ENCODE measurements at regions of chr6 and their contacts with region 1.

Region 1: GRCh38 chr6:4155848-4156466 is 20.6 kb upstream of the ECI2 start:
- DNase-seq: peak; percentile 61 to 81 (median 66)
- H3K4me3 ChIP-seq: no peak overlapping the region
- H3K4me3 Mint-ChIP-seq: no peak overlapping the region
- H3K27ac ChIP-seq: no peak overlapping the region
- H3K27ac Mint-ChIP-seq: no peak overlapping the region
- H3K4me1 ChIP-seq: peaks cover 8% of the 10 kb centered on the region
- H3K4me1 Mint-ChIP-seq: peaks cover 2 to 6% (median 4%) of the 10 kb centered on the region in 3 donors
- H3K27me3 ChIP-seq: no peaks in the 10 kb centered on the region
- H3K27me3 Mint-ChIP-seq: peaks cover 8 to 20% of the 10 kb centered on the region in 2 donors

Region 2: DNA sequence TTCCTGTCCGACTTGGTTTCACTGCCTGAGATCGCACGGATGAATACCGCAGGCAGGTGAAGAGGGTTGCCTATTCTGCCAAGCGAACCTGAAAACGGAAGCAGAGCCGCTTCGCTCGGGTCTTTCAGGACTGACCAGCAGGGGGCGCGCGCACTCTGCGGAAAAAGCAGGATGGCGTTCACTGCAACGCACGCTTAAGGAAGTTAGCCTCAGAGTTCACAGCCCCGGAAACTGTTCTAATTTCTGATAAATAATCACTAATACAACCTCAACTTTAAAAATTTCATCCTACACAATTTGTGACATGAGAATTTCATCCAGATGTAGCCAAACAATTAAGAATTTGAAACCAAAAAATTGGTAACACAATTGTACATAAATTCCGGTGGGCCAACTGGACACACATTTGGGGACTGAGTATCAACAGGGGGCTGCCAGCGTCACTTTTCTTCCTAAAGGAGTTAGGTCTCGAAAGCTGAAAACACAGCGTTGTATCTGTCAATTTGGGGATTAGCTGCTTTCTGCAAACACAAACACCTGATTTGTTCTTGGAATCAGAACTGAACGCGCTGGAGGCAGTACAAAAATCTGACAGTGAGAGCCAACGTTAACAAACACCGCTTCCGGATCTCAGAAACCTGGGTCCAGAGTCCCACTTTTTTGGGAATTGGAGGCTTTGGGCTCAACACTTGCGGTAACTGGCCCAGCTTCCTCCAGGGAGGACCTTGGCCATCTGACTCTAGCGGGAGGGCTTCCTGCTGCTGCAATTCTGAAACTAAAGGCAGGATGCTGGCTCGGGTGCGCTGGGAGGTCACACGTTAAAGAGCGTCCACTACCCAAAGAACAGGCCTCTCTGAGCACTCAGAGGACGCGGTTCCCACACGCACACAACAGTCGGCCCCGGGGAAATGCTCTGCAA is 413.3 kb before region 1 on chr6:
- CTCF ChIA-PET with region 1: interaction called, 13 read pairs
- POLR2A ChIA-PET with region 1: no interaction called
- DNase-seq: peak; percentile 73 to 89 (median 84)
- H3K4me3 ChIP-seq: peak overlapping the region; percentile 11
- H3K4me3 Mint-ChIP-seq: peak overlapping the region; percentile 31 to 87 (median 63)
- H3K27ac ChIP-seq: no peak overlapping the region
- H3K27ac Mint-ChIP-seq: peak overlapping the region in 6 of 8 donors; percentile 7 to 79 (median 57)
- H3K4me1 ChIP-seq: peaks cover 6% of the 10 kb centered on the region
- H3K4me1 Mint-ChIP-seq: peaks cover 9 to 13% (median 11%) of the 10 kb centered on the region in 3 donors
- H3K27me3 ChIP-seq: peaks cover 5% of the 10 kb centered on the region
- H3K27me3 Mint-ChIP-seq: peaks cover under 1 to 34% of the 10 kb centered on the region in 2 donors

Region 3: DNA sequence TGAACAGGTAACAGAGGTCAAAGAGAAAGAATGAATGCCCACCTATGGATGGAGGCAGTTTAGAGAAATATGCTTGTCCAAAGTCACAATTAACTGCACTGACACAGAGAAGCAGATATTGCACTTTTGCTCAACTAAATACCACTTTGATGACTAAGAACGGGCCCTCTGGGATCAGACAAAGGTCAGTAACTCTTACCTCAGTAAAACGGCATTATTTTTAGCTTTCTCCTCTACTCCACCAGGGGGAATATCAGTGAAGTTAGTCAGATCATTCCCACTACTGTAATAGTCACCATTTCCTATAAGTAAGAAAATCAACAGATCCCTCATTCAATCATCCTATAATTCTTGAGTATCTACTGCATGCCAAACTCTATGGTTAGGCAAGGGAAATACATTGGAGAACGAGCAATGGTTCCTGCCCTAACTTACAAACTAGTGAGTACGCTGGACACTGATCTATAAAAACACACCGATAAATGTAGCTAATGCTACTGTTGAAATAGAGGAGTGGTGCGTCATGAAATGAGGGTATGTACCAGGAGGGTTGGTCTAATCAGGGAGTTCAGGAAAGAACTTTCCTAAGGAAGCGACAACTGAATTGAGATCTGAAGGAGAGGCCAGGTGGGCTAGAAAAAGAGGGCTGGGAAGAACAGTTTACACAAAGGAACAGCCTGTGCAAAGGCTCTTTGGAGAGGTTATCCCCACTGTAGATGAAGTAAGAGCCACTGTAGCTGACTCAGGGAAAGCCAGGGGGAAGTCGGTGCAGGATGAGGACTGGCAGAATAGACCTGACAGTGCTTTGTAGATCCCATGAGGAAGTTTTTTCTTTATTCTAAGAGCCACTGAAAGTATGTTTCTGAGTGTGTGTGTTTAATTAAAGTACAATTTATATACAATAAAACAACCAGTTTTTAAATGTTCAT is 29.8 kb before region 1 on chr6:
- CTCF ChIA-PET with region 1: interaction called, 11 read pairs
- POLR2A ChIA-PET with region 1: no interaction called
- DNase-seq: no peak
- H3K4me3 ChIP-seq: no peak overlapping the region
- H3K4me3 Mint-ChIP-seq: no peak overlapping the region
- H3K27ac ChIP-seq: no peak overlapping the region
- H3K27ac Mint-ChIP-seq: peak overlapping the region in 2 of 8 donors; percentile 24 to 35
- H3K4me1 ChIP-seq: no peaks in the 10 kb centered on the region
- H3K4me1 Mint-ChIP-seq: peaks cover 0 to 5% (median 0%) of the 10 kb centered on the region in 3 donors
- H3K27me3 ChIP-seq: no peaks in the 10 kb centered on the region
- H3K27me3 Mint-ChIP-seq: peaks cover 0 to 1% of the 10 kb centered on the region in 2 donors

Region 4: GRCh38 chr6:4135665-4136353 is 20.1 kb before region 1 on chr6:
- CTCF ChIA-PET with region 1: interaction called, 10 read pairs
- POLR2A ChIA-PET with region 1: interaction called, 5 read pairs
- DNase-seq: peak; percentile 87 to 97 (median 93)
- H3K4me3 ChIP-seq: peak overlapping the region; percentile 71
- H3K4me3 Mint-ChIP-seq: peak overlapping the region; percentile 82 to 93 (median 87)
- H3K27ac ChIP-seq: peak overlapping the region; percentile 60
- H3K27ac Mint-ChIP-seq: peak overlapping the region; percentile 67 to 91 (median 84)
- H3K4me1 ChIP-seq: peaks cover 26% of the 10 kb centered on the region
- H3K4me1 Mint-ChIP-seq: peaks cover 43 to 69% (median 56%) of the 10 kb centered on the region in 3 donors
- H3K27me3 ChIP-seq: no peaks in the 10 kb centered on the region
- H3K27me3 Mint-ChIP-seq: no peaks in the 10 kb centered on the region

Region 5: DNA sequence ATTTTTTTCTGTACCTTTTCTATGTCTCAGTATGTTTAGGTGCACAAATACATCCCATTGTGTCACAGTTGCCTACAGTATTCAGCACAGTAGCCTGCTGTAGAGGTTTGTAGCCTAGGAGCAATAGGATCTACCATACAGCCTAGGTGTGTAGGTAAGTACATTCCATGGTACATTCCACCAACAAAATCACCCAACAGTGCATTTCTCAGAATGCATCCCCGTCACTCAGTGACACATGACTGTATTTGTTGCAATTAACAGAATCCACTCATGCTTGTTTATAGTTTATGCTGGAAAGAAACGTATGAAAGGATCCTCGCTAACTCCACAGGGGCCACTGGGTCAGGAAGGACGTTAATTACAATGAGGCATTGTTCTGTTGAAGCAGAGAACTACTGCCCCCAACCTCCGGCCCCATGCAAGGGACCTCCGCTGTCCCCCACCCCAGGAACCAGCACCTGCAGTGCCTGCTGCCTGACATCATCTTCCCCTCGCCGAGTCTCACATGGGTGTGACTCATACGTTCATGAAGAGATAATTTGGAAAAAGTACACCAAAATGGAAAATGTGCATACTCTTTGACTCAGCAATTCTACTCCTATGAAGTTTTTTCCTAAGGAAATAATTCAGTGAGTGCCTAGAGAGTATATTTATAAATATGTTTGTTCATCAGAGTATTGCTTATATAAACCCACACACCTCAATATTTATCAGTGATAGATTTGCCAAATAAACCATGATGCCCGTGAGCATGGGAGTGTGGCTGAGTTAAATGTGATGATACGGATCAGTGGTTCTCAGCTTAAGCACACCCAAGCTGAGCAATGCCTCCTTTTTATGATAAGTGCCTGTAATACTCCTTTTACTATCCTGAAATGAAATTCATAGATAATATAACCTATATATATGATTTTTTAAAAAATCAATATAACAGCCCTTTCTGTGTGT is 135.8 kb after region 1 on chr6:
- CTCF ChIA-PET with region 1: no interaction called
- POLR2A ChIA-PET with region 1: no interaction called
- DNase-seq: no peak
- H3K4me3 ChIP-seq: no peak overlapping the region
- H3K4me3 Mint-ChIP-seq: no peak overlapping the region
- H3K27ac ChIP-seq: no peak overlapping the region
- H3K27ac Mint-ChIP-seq: no peak overlapping the region
- H3K4me1 ChIP-seq: no peaks in the 10 kb centered on the region
- H3K4me1 Mint-ChIP-seq: no peaks in the 10 kb centered on the region
- H3K27me3 ChIP-seq: no peaks in the 10 kb centered on the region
- H3K27me3 Mint-ChIP-seq: peaks cover 0 to 4% of the 10 kb centered on the region in 2 donors

Measured in CD8-positive, alpha-beta memory T cell (primary cell).